PC-9 (cell line): ENCODE measurements at regions of chr10 and their contacts with region 1.

Region 1: GRCh38 chr10:14837757-14838581 is at the starts of genes CDNF, HSPA14 and MSANTD7:
- DNase-seq: peak; percentile 94 to 99
- H3K4me3 ChIP-seq: peak within 1 kb of the TSS; percentile 80
- H3K27ac ChIP-seq: peak within 1 kb of the TSS; percentile 60
- H3K4me1 ChIP-seq: peaks cover 14% of the 10 kb centered on the region
- H3K27me3 ChIP-seq: no peaks in the 10 kb centered on the region
- CTCF ChIP-seq: no peak
- total RNA-seq, gene CDNF: 0.48 and 1.2 TPM in 2 replicates
- total RNA-seq, gene HSPA14: 13.9 and 23.1 TPM in 2 replicates
- total RNA-seq, gene MSANTD7: 8.5 and 11.6 TPM in 2 replicates

Region 2: DNA sequence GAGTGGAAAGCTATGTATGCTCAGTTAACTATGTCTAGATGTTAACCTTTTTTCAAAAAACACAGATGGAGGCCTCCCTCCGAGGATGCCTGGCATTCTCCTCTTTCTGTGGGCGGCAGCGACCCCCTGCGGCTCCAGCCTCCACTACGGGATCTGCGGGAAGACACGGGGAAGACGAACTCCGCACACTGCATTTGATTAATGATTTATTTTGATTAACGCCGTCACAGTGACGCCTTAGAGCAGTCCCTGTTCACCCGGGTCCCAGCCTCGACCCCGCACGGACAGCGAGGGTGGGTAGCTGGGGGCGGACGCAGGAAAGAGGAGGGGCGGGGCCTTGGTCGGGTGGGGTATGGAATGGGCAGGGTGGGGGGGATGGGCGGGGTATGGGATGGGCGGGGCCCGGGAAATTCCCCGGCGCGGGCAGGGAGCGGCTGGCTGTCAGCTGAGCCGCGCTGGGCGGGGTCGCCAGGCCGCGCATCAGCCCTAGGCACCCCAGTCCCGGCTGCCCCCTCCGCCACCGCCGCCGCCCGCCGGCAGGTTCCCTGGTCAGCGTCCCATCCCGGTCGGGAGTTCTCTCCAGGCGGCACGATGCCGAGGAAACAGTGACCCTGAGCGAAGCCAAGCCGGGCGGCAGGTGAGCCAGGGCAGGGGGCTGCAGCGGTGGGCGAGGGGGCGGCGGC is 1738.2 kb before region 1 on chr10 and contains the start of gene OPTN:
- CTCF ChIA-PET with region 1: interaction called, 14 read pairs
- POLR2A ChIA-PET with region 1: no interaction called
- intact Hi-C with region 1: no loop called
- DNase-seq: peak; percentile 61 to 77
- H3K4me3 ChIP-seq: peak within 1 kb of the TSS; percentile 70
- H3K27ac ChIP-seq: peak within 1 kb of the TSS; percentile 38; the same call in 1 of the 2 replicates
- H3K4me1 ChIP-seq: 0 out of 2 replicates have a peak, but pooled peaks cover 3% of the 10 kb centered on the region
- H3K27me3 ChIP-seq: no peaks in the 10 kb centered on the region
- CTCF ChIP-seq: peak; percentile 71
- total RNA-seq, gene OPTN: 26.6 and 26.8 TPM in 2 replicates

Region 3: GRCh38 chr10:14536241-14537213 is 301.4 kb before region 1 on chr10:
- CTCF ChIA-PET with region 1: no interaction called
- POLR2A ChIA-PET with region 1: no interaction called
- intact Hi-C with region 1: loop called (anchors 5 kb)
- DNase-seq: peak in 1 of 2 experiments; percentile 65
- H3K4me3 ChIP-seq: no peak overlapping the region
- H3K27ac ChIP-seq: no peak overlapping the region
- H3K4me1 ChIP-seq: peaks cover 8% of the 10 kb centered on the region; the same call in 1 of the 2 replicates
- H3K27me3 ChIP-seq: no peaks in the 10 kb centered on the region
- CTCF ChIP-seq: peak; percentile 68

Region 4: GRCh38 chr10:14653271-14654228 is 184.4 kb before region 1 on chr10:
- CTCF ChIA-PET with region 1: no interaction called
- POLR2A ChIA-PET with region 1: interaction called, 3 read pairs
- intact Hi-C with region 1: loop called (anchors 5 kb)
- DNase-seq: peak; percentile 80 to 96
- H3K4me3 ChIP-seq: peak overlapping the region; percentile 51
- H3K27ac ChIP-seq: peak overlapping the region; percentile 92
- H3K4me1 ChIP-seq: peaks cover 73% of the 10 kb centered on the region
- H3K27me3 ChIP-seq: no peaks in the 10 kb centered on the region
- CTCF ChIP-seq: no peak

Region 5: GRCh38 chr10:14758994-14759664 is 78.8 kb before region 1 on chr10:
- CTCF ChIA-PET with region 1: no interaction called
- POLR2A ChIA-PET with region 1: no interaction called
- intact Hi-C with region 1: no loop called
- DNase-seq: no peak
- H3K4me3 ChIP-seq: no peak overlapping the region
- H3K27ac ChIP-seq: no peak overlapping the region
- H3K4me1 ChIP-seq: no peaks in the 10 kb centered on the region
- H3K27me3 ChIP-seq: no peaks in the 10 kb centered on the region
- CTCF ChIP-seq: no peak

Region 6: GRCh38 chr10:14878266-14879054 is 40.5 kb after region 1 on chr10 and contains the start of gene SUV39H2:
- CTCF ChIA-PET with region 1: no interaction called
- POLR2A ChIA-PET with region 1: interaction called, 4 read pairs
- intact Hi-C with region 1: loop called (anchors 1 kb)
- DNase-seq: peak; percentile 76 to 96
- H3K4me3 ChIP-seq: peak within 1 kb of the TSS; percentile 67
- H3K27ac ChIP-seq: peak within 1 kb of the TSS; percentile 79
- H3K4me1 ChIP-seq: peaks cover 24% of the 10 kb centered on the region
- H3K27me3 ChIP-seq: no peaks in the 10 kb centered on the region
- CTCF ChIP-seq: no peak
- total RNA-seq, gene SUV39H2: 13.4 and 20.9 TPM in 2 replicates